Naive thymus-derived CD4-positive, alpha-beta T cell (primary cell): ENCODE measurements at regions of chr1 and their contacts with region 1.

Region 1: GRCh38 chr1:45803301-45803780 is at the start of gene MAST2:
- DNase-seq: peak; percentile 53 to 95 (median 71)
- ATAC-seq: peak; percentile 98
- H3K4me3 ChIP-seq: peak within 1 kb of the TSS; percentile 65
- H3K4me3 Mint-ChIP-seq: peak within 1 kb of the TSS; percentile 87 to 100 (median 92)
- H3K27ac ChIP-seq: peak within 1 kb of the TSS; percentile 41
- H3K27ac Mint-ChIP-seq: peak within 1 kb of the TSS; percentile 10 to 87 (median 77)
- H3K4me1 ChIP-seq: peaks cover 0 to 7% of the 10 kb centered on the region in 2 donors
- H3K4me1 Mint-ChIP-seq: peaks cover 21 to 33% (median 26%) of the 10 kb centered on the region in 7 donors
- H3K27me3 ChIP-seq: no peaks in the 10 kb centered on the region
- H3K27me3 Mint-ChIP-seq: no peaks in the 10 kb centered on the region
- total RNA-seq, gene MAST2: 4.9 to 22.7 (median 7.1) TPM

Region 2: GRCh38 chr1:45785583-45785982 is 17.8 kb before region 1 on chr1:
- CTCF ChIA-PET with region 1: no interaction called
- POLR2A ChIA-PET with region 1: no interaction called
- intact Hi-C with region 1: loop called in 1 of 2 experiments (anchors 2 kb)
- DNase-seq: peak in 7 of 9 donors; percentile 15 to 42 (median 34)
- ATAC-seq: peak; percentile 85
- H3K4me3 ChIP-seq: peak overlapping the region; percentile 31
- H3K4me3 Mint-ChIP-seq: peak overlapping the region; percentile 79 to 92 (median 84)
- H3K27ac ChIP-seq: no peak overlapping the region
- H3K27ac Mint-ChIP-seq: peak overlapping the region in 3 of 9 donors; percentile 14 to 76 (median 20)
- H3K4me1 ChIP-seq: peaks cover 12 to 15% of the 10 kb centered on the region in 2 donors
- H3K4me1 Mint-ChIP-seq: peaks cover 17 to 26% (median 23%) of the 10 kb centered on the region in 7 donors
- H3K27me3 ChIP-seq: no peaks in the 10 kb centered on the region
- H3K27me3 Mint-ChIP-seq: peaks cover 0 to 49% (median 10%) of the 10 kb centered on the region in 5 donors